ENCODE measurements at regions of chr2 and their contacts with region 1.

Region 1: GRCh38 chr2:161223139-161223732 is 63.0 kb downstream of the TANK start:
- DNase-seq: peak; percentile 24
- H3K4me3 ChIP-seq: no peak overlapping the region
- H3K27ac ChIP-seq: no peak overlapping the region
- H3K4me1 ChIP-seq: no peaks in the 10 kb centered on the region
- H3K27me3 ChIP-seq: no peaks in the 10 kb centered on the region
- CTCF ChIP-seq: peak; percentile 61 to 62

Region 2: DNA sequence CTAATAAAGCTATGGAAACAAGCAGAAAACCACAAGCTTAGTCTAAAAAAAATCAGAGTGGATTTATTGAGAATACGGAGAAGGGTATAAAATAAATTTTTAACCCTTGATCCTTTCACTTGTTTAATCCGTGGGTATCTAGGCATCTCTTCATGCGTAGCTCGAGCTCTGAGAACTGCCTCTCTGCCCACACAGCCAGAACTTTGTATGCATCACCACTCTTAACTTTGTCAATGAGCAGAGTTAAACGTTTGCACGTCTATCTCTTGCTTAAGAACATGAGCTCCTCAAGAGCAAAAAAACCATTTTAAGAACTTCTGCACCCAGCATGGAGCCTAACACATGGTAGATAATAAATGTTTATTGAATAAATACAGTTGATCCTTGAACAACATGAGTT is 89.9 kb before region 1 on chr2:
- CTCF ChIA-PET with region 1: interaction called, 10 read pairs
- dilution Hi-C with region 1: no loop called
- in situ Hi-C with region 1: no loop called
- intact Hi-C with region 1: no loop called
- DNase-seq: no peak
- H3K4me3 ChIP-seq: no peak overlapping the region
- H3K27ac ChIP-seq: no peak overlapping the region
- H3K4me1 ChIP-seq: peaks cover 28% of the 10 kb centered on the region
- H3K27me3 ChIP-seq: no peaks in the 10 kb centered on the region
- CTCF ChIP-seq: no peak

Measured in mammary epithelial cell (primary cell).